GM13976 (cell line): ENCODE measurements at regions of chr4 and their contacts with region 1.

Region 1: DNA sequence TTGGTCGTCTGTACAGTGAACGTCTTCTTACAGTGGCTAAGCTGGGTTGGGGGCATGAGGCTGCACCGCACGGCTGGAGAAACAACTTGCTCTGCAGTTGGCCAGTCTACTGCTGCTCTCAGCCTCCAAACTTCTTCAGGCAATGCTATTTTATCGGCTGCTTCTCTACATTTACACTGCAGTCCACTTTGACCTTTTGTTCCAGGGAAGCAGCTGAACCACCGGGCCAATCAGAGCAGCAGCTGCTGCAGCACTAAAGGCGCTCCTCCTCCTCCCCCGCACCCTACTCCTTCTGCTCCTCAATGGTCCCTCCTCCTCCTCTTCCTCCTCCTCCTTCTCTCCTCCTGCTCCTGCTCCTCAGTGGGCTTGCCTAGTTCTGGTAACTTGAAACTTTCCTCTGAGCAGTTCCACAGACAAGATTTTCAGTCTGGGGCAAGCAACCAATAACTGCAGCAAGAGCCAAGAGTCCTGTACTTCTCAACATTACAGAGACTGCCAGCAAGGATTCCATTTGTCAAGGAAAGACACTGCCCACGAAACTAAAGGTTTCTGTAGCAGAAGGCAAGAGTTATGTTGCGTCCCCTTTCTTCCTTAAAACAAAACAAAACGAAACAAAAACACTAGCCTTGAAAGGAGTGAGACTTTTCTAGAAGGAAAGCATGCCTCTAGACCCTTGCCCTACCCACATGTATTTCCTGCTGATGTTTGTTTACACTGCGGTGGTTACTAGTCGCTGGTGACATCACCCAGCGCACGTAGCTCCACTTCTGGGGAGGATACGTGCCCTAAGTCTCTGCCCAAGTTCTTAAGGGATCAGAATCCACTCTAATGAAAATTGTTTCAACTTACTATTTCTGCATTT is 125.7 kb upstream of the NAP1L5 start:
- DNase-seq: peak; percentile 37
- CTCF ChIP-seq: no peak

Region 2: GRCh38 chr4:88523325-88524129 is 299.8 kb before region 1 on chr4 and contains the start of gene PYURF:
- in situ Hi-C with region 1: loop called (anchors 25 kb)
- DNase-seq: peak; percentile 89
- CTCF ChIP-seq: no peak

Region 3: GRCh38 chr4:89024051-89024675 is 200.9 kb after region 1 on chr4:
- in situ Hi-C with region 1: loop called (anchors 10 kb)
- DNase-seq: peak; percentile 60
- CTCF ChIP-seq: peak; percentile 51